Activated naive CD4-positive, alpha-beta T cell treated with anti-CD3 and anti-CD28 coated beads for 36 hours (primary cell): ENCODE measurements at regions of chr20 and their contacts with region 1.

Region 1: DNA sequence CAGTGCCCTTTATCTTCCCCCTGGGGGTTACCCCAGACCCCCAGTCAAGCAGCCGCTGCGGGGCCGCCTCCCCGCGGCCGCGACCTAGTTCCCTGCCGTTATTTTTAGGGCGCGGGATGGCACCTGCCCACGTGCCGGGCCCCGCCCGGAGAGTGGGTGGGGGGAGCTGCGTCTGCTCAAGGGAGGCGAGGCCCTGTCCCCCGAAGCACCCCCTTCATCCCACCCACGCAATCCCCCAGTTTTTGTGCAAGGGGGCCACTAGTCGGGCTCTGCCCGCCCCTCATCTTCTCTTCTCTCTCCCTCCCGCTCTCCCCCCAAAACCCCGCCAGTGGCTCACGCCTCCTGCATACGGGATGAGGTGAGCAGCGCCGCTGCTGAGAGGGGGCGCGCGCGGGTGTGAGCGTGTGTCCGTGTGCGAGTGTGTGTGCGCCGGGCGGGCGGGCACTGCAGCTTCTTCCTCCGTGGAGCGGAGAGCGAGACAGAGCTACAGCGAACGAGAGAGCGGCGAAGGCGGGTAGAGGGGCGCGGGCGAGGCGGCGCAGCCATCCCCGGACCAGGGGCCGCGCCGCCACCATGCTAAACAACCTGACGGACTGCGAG is at the start of gene SLC12A5:
- DNase-seq: no peak
- H3K4me3 Mint-ChIP-seq: no peak within 1 kb of the TSS
- H3K27ac Mint-ChIP-seq: no peak within 1 kb of the TSS
- H3K4me1 Mint-ChIP-seq: no peaks in the 10 kb centered on the region
- H3K27me3 Mint-ChIP-seq: peaks cover 50% of the 10 kb centered on the region
- total RNA-seq, gene SLC12A5: not detected

Region 2: GRCh38 chr20:46040902-46041535 is 12.1 kb after region 1 on chr20:
- CTCF ChIA-PET with region 1: no interaction called
- intact Hi-C with region 1: loop called (anchors 1 kb)
- DNase-seq: peak; percentile 73
- H3K4me3 Mint-ChIP-seq: no peak overlapping the region
- H3K27ac Mint-ChIP-seq: no peak overlapping the region
- H3K4me1 Mint-ChIP-seq: no peaks in the 10 kb centered on the region
- H3K27me3 Mint-ChIP-seq: peaks cover 32% of the 10 kb centered on the region

Region 3: GRCh38 chr20:46073443-46073842 is 44.6 kb after region 1 on chr20:
- CTCF ChIA-PET with region 1: no interaction called
- intact Hi-C with region 1: no loop called
- DNase-seq: no peak
- H3K4me3 Mint-ChIP-seq: no peak overlapping the region
- H3K27ac Mint-ChIP-seq: no peak overlapping the region
- H3K4me1 Mint-ChIP-seq: no peaks in the 10 kb centered on the region
- H3K27me3 Mint-ChIP-seq: no peaks in the 10 kb centered on the region